Activated B cell treated with CpG ODN at 0.5 μM for 24 hours (primary cell): ENCODE measurements at regions of chr4 and their contacts with region 1.

Region 1: DNA sequence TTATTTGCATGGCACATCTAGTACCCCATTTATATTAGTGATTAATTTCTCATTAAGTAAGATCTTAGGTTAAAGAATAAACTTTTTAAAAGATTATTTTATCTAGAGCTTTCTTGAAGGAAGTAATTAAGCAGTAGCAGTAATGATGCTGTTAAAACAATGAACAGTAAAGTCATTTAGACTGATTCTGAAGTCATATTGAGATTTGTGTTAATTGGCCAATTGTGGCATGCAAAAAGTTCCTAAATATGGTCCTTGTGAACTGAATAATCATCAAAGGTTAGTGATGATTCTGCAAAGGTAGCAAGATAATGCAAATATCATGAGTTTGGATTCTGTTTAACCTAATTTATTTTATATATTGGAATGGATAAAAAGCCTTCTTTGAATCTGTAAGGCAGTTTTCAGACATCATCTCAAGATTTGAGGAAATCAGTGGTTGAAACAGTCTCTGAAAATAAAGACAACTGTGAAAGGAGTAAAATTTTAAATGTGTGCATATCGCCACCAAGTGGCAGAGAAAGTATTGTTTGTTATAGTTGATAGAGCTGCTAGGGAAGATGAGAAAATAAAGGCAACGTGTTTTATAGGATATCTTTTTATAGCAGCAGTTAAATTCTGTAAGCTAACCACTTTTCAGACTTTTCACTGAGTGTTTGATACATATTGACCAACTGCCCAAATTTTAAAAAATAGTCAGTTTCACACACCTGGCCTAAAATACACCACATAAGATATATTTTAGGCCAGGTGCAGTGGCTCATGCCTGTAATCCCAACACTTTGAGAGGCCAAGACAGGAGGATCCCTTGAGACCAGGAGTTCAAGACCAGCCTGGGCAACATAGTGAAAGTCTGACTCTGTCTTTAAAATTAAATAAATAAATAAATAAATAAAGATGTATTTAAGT is 79.6 kb downstream of the CCKAR start:
- DNase-seq: no peak
- ATAC-seq: no peak
- H3K4me3 Mint-ChIP-seq: no peak overlapping the region
- H3K27ac Mint-ChIP-seq: no peak overlapping the region
- H3K4me1 Mint-ChIP-seq: no peaks in the 10 kb centered on the region
- H3K27me3 Mint-ChIP-seq: no peaks in the 10 kb centered on the region
- CTCF ChIP-seq: no peak

Region 2: DNA sequence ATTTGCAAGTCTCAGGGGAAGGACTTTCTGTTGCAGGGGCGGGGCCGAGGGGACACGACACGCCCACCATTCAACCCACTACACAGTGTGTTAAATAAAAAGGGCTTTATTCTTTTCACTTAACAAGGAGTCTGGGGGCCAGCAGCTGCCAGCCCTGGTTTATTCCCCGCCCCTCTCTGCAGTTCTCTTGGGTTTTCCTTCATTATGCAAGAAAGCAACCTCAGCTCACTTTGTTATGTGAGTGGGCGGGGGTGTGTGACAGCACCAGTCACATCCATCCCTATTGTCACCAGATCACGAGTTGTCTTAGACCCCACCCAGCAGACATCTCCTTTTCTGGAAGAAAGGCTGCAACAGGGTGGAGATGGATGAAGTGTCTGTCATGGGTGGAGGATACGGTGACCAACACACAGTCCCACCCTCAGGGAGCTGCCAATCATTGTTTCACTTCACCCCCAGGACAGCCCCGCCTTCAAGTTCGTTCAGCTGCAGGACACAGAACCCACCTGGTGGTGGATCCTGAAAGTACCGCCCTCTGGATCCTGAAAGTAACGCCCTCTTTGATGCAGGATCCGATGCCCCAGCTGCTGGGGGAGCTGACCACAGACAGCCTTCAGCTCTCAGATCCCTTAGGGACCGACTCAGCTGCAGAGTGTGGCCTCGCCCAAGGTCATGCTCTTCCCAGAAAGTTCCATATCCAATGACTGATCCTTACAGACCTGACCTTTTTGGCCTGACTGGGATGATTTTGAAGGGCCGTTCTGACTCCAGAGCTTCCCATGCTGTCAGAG is 417.0 kb before region 1 on chr4:
- CTCF ChIA-PET with region 1: interaction called, 16 read pairs
- POLR2A ChIA-PET with region 1: no interaction called
- intact Hi-C with region 1: loop called (anchors 1 kb)
- DNase-seq: no peak
- ATAC-seq: peak; percentile 70
- H3K4me3 Mint-ChIP-seq: no peak overlapping the region
- H3K27ac Mint-ChIP-seq: no peak overlapping the region
- H3K4me1 Mint-ChIP-seq: peaks cover 8% of the 10 kb centered on the region
- H3K27me3 Mint-ChIP-seq: no peaks in the 10 kb centered on the region
- CTCF ChIP-seq: no peak

Region 3: GRCh38 chr4:26061248-26061986 is 349.2 kb before region 1 on chr4:
- CTCF ChIA-PET with region 1: interaction called, 5 read pairs
- POLR2A ChIA-PET with region 1: no interaction called
- intact Hi-C with region 1: loop called (anchors 1 kb)
- DNase-seq: no peak
- ATAC-seq: peak; percentile 58
- H3K4me3 Mint-ChIP-seq: no peak overlapping the region
- H3K27ac Mint-ChIP-seq: no peak overlapping the region
- H3K4me1 Mint-ChIP-seq: no peaks in the 10 kb centered on the region
- H3K27me3 Mint-ChIP-seq: peaks cover 2% of the 10 kb centered on the region
- CTCF ChIP-seq: no peak

Region 4: DNA sequence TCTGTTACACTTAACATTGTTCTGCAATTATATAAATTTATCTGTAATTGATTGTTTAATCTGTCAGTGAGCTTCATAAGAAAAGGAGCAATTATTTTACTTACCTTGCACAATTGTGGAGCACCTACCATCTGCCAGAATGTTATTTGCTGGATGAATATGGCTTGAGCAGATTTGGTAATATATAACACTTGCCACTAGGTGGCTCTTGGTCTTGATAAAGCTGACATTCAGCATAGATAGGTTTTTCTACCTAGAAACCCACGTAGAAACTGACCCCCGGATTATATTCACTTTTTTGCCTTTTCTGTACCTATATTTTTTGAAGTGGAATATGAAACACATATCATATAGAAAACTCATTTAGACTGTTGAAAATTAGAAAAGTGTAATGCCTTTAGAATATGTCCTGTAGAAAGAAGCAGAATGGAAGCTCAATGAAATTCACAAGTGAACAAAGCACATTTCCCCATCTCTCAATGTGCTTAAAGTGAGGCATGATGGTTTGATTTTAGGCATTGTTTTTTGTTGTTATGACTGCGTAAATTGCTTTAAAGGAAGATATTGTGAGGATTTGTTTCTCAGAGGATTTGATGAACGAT is 80.4 kb before region 1 on chr4:
- CTCF ChIA-PET with region 1: interaction called, 29 read pairs
- POLR2A ChIA-PET with region 1: interaction called, 3 read pairs
- intact Hi-C with region 1: loop called (anchors 1 kb)
- DNase-seq: no peak
- ATAC-seq: peak; percentile 81
- H3K4me3 Mint-ChIP-seq: no peak overlapping the region
- H3K27ac Mint-ChIP-seq: no peak overlapping the region
- H3K4me1 Mint-ChIP-seq: peaks cover 14% of the 10 kb centered on the region
- H3K27me3 Mint-ChIP-seq: no peaks in the 10 kb centered on the region
- CTCF ChIP-seq: peak; percentile 62

Region 5: GRCh38 chr4:26388671-26389070 is 22.0 kb before region 1 on chr4:
- CTCF ChIA-PET with region 1: no interaction called
- POLR2A ChIA-PET with region 1: no interaction called
- intact Hi-C with region 1: no loop called
- DNase-seq: no peak
- ATAC-seq: no peak
- H3K4me3 Mint-ChIP-seq: no peak overlapping the region
- H3K27ac Mint-ChIP-seq: no peak overlapping the region
- H3K4me1 Mint-ChIP-seq: no peaks in the 10 kb centered on the region
- H3K27me3 Mint-ChIP-seq: no peaks in the 10 kb centered on the region
- CTCF ChIP-seq: no peak

Region 6: GRCh38 chr4:26459054-26459755 is 48.6 kb after region 1 on chr4:
- CTCF ChIA-PET with region 1: no interaction called
- POLR2A ChIA-PET with region 1: no interaction called
- intact Hi-C with region 1: no loop called
- DNase-seq: no peak
- ATAC-seq: peak; percentile 64
- H3K4me3 Mint-ChIP-seq: peak overlapping the region; percentile 55
- H3K27ac Mint-ChIP-seq: no peak overlapping the region
- H3K4me1 Mint-ChIP-seq: peaks cover 6% of the 10 kb centered on the region
- H3K27me3 Mint-ChIP-seq: peaks cover 4% of the 10 kb centered on the region
- CTCF ChIP-seq: no peak